A549 (cell line): ENCODE measurements at regions of chr19 and their contacts with region 1.

Region 1: GRCh38 chr19:2475702-2476450 is at the start of gene GADD45B:
- DNase-seq: peak; percentile 94 to 96
- ATAC-seq: peak; percentile 41 to 65
- H3K4me3 ChIP-seq: peak within 1 kb of the TSS; percentile 95
- H3K27ac ChIP-seq: peak within 1 kb of the TSS; percentile 93 to 99
- H3K4me1 ChIP-seq: peaks cover 9% of the 10 kb centered on the region
- CTCF ChIP-seq: no peak
- EP300 ChIP-seq: no peak
- POLR2A ChIP-seq: peak; percentile 100
- RAD21 ChIP-seq: peak in 1 of 2 experiments; percentile 24; a peak in 2 of 5 replicates
- polyA plus RNA-seq, gene GADD45B: 65.3 and 72.5 TPM in 2 replicates

Region 2: DNA sequence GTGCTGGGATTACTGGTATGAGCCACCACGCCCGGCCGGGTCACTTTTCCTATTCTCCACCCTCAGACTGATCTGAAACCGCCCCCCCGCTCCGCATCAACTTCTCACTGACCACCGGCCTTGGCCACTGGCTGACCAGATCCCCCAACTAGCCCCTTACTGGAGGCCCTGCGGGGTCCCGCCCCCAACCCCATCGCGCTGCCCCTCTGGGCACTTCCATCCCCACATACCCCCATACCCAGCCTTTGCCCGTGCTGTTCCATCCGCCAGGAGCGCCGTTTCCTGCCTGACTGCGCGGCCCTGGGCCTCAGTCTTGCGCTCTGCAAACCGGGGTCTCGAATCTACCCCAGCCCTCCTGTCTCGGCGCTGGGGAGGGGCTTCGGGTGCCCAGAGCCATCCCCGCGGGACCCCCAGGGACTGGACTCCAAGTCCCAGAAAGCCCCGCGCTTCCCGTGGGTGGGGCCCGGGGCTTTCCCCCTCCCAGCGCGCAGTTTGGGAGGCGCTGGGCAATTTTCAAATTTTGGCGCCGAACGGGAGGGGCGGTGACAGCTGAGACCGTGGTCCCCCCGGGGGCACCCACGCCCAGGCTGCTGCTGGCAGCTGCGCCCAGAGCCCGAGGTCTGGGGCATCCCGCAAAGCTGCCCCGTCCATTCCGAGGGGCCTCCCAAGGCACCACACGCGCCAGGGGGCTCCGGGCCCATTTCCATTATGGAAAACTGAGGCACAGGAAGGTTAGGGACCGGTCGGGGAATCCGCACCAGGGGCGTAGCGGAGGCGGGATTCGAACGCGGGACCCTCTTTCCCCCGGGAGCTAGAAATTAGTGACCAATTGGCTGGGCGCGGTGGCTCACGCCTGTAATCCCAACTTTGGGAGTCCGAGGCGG is 13.9 kb before region 1 on chr19:
- CTCF ChIA-PET with region 1: interaction called, 16 read pairs
- POLR2A ChIA-PET with region 1: interaction called, 44 read pairs
- DNase-seq: peak in 1 of 2 experiments; percentile 85
- ATAC-seq: peak; percentile 76 to 84
- H3K4me3 ChIP-seq: peak overlapping the region; percentile 58
- H3K27ac ChIP-seq: peak overlapping the region; percentile 88 to 98
- H3K4me1 ChIP-seq: 0 out of 3 replicates have a peak, but pooled peaks cover 6% of the 10 kb centered on the region
- CTCF ChIP-seq: no peak
- EP300 ChIP-seq: no peak
- POLR2A ChIP-seq: no peak
- RAD21 ChIP-seq: no peak

Region 3: DNA sequence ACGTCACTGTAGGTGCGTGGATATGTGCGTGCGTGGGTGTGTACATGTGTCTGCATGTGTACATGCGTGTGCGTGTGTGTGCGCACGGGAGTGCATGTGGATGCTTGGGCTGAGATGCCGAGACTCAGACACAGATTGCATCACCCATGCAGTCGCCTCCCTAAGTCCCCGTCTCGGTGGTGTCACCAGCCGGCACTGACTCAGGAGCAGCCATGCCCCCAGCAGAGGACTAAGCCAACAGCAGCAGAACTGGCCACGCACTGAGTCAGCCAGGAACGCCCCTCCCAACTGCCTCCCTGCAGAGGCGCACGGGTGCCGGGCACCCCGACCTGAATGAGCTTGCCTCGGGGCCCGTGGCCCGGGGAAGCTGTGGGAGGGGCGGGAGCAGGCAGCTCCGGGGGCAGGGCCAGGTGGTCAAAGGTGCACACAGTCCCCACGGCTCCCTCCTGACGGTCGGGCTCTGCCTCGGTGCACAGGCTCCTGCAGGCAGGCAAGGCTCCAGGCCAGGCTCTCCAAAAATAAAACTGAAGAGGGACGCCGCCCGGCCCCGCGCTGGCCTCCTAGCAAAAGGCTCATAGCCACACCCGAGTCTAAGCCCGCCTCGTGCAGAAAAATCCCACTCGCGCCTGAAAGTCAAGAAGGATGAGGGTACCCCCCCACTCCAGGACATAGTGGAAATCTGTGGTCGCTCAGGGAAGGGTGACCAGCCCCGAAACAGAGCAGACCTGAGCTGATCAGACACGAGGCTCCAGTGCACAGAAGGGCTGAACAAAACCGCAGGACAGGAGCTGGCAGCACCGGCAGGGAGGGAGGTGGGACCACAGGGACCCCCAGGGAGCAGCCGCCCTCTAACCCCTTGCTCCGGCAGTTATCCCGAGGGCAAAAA is 49.2 kb after region 1 on chr19:
- CTCF ChIA-PET with region 1: interaction called, 4 read pairs
- POLR2A ChIA-PET with region 1: interaction called, 50 read pairs
- DNase-seq: peak; percentile 74 to 86
- ATAC-seq: peak; percentile 82 to 91
- H3K4me3 ChIP-seq: peak overlapping the region; percentile 31
- H3K27ac ChIP-seq: peak overlapping the region; percentile 97 to 99
- H3K4me1 ChIP-seq: peaks cover 53% of the 10 kb centered on the region
- CTCF ChIP-seq: no peak
- EP300 ChIP-seq: peak; percentile 59 to 77; a peak in 3 of 5 replicates
- POLR2A ChIP-seq: no peak
- RAD21 ChIP-seq: peak; percentile 4 to 36; a peak in 2 of 5 replicates

Region 4: GRCh38 chr19:2552859-2553258 is 77.0 kb after region 1 on chr19:
- CTCF ChIA-PET with region 1: interaction called, 3 read pairs
- POLR2A ChIA-PET with region 1: interaction called, 24 read pairs
- DNase-seq: no peak
- ATAC-seq: peak in 1 of 2 experiments; percentile 19; a peak in 2 of 6 replicates
- H3K4me3 ChIP-seq: peak overlapping the region; percentile 35
- H3K27ac ChIP-seq: peak overlapping the region; percentile 76 to 84
- H3K4me1 ChIP-seq: peaks cover 21% of the 10 kb centered on the region
- CTCF ChIP-seq: no peak
- EP300 ChIP-seq: no peak
- POLR2A ChIP-seq: no peak
- RAD21 ChIP-seq: no peak

Region 5: DNA sequence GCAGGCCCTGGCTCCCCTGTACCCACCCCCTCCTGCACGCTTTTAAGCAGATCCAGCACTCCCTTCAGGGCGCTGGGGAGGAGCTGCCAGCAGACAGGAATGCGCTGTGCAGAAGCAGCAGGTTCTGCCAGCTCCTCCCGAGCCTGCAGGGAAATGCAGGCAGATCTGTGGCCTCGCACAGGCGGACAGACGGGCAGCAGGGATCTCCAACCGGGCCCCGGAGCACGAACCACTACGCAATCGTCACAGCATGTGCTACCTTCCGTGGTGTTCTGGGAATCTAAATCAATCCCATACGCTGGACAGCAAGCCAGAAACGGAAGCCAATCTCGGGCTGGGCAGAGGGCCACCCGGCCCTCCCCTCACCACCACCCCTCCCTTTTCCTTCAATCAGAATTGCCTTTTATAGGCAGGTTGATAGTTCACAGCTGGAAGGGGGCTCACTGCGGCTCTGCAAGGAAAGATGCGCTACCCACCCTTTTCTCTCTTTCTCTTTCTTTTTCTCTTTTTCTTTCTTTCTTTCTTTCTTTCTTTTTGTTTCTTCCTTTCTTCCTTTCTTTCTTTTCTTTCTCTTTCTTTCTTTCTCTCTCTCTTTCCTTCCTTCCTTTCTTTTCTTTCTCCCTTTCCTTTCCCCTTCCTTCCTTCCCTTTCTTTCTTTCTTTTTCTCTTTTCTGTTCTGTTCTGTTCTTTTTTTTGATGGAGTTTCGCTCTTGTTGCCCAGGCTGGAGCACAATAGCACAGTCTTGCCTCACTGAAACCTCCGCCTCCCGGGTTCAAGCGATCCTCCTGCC is 126.7 kb after region 1 on chr19:
- CTCF ChIA-PET with region 1: interaction called, 7 read pairs
- POLR2A ChIA-PET with region 1: interaction called, 26 read pairs
- DNase-seq: no peak
- ATAC-seq: no peak
- H3K4me3 ChIP-seq: no peak overlapping the region
- H3K27ac ChIP-seq: peak overlapping the region in 1 of 2 experiments; percentile 55; a peak in 2 of 6 replicates
- H3K4me1 ChIP-seq: peaks cover 6% of the 10 kb centered on the region; the same call in 1 of the 3 replicates
- CTCF ChIP-seq: no peak
- EP300 ChIP-seq: no peak
- POLR2A ChIP-seq: no peak
- RAD21 ChIP-seq: no peak

Region 6: GRCh38 chr19:2627319-2627829 is 151.5 kb after region 1 on chr19:
- CTCF ChIA-PET with region 1: no interaction called
- POLR2A ChIA-PET with region 1: interaction called, 18 read pairs
- DNase-seq: peak; percentile 76 to 81
- ATAC-seq: peak; percentile 88 to 92
- H3K4me3 ChIP-seq: no peak overlapping the region
- H3K27ac ChIP-seq: peak overlapping the region; percentile 68 to 70; a peak in 5 of 6 replicates
- H3K4me1 ChIP-seq: peaks cover 15% of the 10 kb centered on the region
- CTCF ChIP-seq: no peak
- EP300 ChIP-seq: no peak
- POLR2A ChIP-seq: no peak
- RAD21 ChIP-seq: no peak

Region 7: GRCh38 chr19:2663920-2664571 is 188.2 kb after region 1 on chr19:
- CTCF ChIA-PET with region 1: no interaction called
- POLR2A ChIA-PET with region 1: no interaction called
- DNase-seq: no peak
- ATAC-seq: no peak; a peak in 1 of 6 replicates
- H3K4me3 ChIP-seq: no peak overlapping the region
- H3K27ac ChIP-seq: no peak overlapping the region
- H3K4me1 ChIP-seq: no peaks in the 10 kb centered on the region
- CTCF ChIP-seq: no peak
- EP300 ChIP-seq: no peak
- POLR2A ChIP-seq: no peak
- RAD21 ChIP-seq: no peak